Activated CD8-positive, alpha-beta T cell treated with anti-CD3 and anti-CD28 coated beads, Interleukin-2, amount 10 ng/mL, durations not matched to agents 7 days and 5 days (primary cell): ENCODE measurements at regions of chr5 and their contacts with region 1.

Region 1: GRCh38 chr5:14364576-14365472 is 216.8 kb upstream of the OTULINL start:
- DNase-seq: no peak
- ATAC-seq: peak; percentile 25
- H3K4me3 Mint-ChIP-seq: peak overlapping the region; percentile 56
- H3K27ac Mint-ChIP-seq: peak overlapping the region; percentile 36
- H3K4me1 Mint-ChIP-seq: peaks cover 61% of the 10 kb centered on the region
- H3K27me3 Mint-ChIP-seq: peaks cover 1% of the 10 kb centered on the region

Region 2: DNA sequence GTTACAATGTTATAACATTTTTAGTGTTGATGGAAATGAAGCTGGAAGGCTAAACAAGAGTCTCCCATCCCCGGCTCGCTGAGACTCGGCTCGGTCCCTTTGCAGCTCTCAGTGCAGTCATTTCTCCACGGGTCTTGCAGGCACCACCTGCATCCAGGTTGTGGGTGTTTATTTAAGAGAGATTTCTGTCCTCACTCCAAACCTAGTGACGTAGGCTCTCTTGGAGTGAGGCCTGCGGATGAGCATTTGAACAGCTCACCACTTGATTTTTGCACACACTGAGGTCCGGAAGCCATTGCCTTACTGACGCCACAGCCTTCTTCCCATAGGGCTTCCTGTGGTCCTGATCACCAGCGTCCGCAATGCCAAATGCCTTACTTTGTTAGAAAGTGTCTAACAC is 19.1 kb after region 1 on chr5:
- CTCF ChIA-PET with region 1: interaction called, 29 read pairs
- POLR2A ChIA-PET with region 1: interaction called, 3 read pairs
- DNase-seq: no peak
- ATAC-seq: no peak
- H3K4me3 Mint-ChIP-seq: no peak overlapping the region
- H3K27ac Mint-ChIP-seq: no peak overlapping the region
- H3K4me1 Mint-ChIP-seq: peaks cover 14% of the 10 kb centered on the region
- H3K27me3 Mint-ChIP-seq: peaks cover 5% of the 10 kb centered on the region

Region 3: GRCh38 chr5:14415024-14415697 is 50.3 kb after region 1 on chr5:
- CTCF ChIA-PET with region 1: interaction called, 39 read pairs
- POLR2A ChIA-PET with region 1: interaction called, 15 read pairs
- DNase-seq: peak; percentile 60
- ATAC-seq: peak; percentile 59
- H3K4me3 Mint-ChIP-seq: peak overlapping the region; percentile 71
- H3K27ac Mint-ChIP-seq: peak overlapping the region; percentile 94
- H3K4me1 Mint-ChIP-seq: peaks cover 63% of the 10 kb centered on the region
- H3K27me3 Mint-ChIP-seq: no peaks in the 10 kb centered on the region

Region 4: DNA sequence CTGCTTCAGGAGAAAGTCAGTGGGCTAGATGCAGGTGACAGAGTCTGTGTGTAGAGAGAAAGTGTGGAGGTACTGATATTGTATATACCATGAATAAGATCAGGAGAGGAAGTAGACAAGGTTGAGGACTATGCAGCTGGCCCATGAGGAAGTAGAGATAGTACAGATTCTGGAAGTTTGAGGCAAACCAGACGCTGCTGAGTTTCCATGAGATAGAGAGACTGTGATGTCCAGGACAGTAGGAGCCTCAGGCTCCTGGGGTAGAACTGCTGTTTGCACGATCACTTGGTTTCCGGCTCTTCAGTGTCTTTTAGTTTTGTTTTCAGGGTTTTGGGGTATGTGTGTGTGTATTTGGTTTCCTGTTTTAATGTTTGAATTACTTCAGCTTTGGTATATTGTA is 230.4 kb after region 1 on chr5:
- CTCF ChIA-PET with region 1: interaction called, 27 read pairs
- POLR2A ChIA-PET with region 1: interaction called, 7 read pairs
- DNase-seq: peak; percentile 75
- ATAC-seq: peak; percentile 79
- H3K4me3 Mint-ChIP-seq: peak overlapping the region; percentile 66
- H3K27ac Mint-ChIP-seq: peak overlapping the region; percentile 97
- H3K4me1 Mint-ChIP-seq: peaks cover 91% of the 10 kb centered on the region
- H3K27me3 Mint-ChIP-seq: no peaks in the 10 kb centered on the region

Region 5: DNA sequence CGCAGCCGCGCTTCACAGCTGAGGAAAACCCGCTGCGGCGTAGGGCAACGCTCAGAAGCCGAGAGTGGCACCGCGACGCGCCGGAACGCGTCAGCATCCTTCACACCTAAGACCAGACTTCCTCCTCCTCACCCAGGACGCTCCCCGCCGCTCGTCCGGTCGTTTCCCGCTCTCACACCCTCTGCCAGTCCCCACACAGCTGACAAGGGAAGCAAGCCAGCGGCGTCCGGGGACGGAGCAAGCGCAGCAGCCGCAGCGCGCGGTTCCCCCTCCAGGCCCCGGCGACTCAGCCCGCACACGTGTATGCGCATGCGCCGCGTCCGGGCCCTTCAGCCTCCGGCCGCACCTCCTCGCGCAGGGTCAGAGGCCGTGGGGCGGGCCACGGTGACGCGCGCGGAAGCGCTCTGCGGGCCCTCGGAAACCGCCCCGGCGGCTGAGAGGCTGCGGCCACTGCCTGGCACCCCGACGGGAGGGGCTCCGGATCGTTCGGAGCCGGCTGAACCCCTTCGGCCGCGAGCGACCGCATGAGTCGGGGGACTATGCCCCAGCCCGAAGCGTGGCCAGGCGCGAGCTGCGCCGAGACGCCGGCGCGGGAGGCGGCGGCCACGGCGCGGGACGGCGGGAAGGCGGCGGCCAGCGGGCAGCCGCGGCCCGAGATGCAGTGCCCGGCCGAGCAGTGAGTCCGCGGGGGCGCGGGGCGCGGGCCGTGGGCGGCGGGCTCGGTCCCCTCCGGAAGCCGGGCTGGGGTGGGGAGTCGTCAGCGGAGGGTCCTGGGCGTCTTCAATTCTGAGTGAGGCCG is 299.7 kb after region 1 on chr5 and contains the start of gene OTULIN:
- CTCF ChIA-PET with region 1: interaction called, 13 read pairs
- POLR2A ChIA-PET with region 1: no interaction called
- DNase-seq: peak; percentile 91
- ATAC-seq: peak; percentile 73
- H3K4me3 Mint-ChIP-seq: peak within 1 kb of the TSS; percentile 94
- H3K27ac Mint-ChIP-seq: peak within 1 kb of the TSS; percentile 98
- H3K4me1 Mint-ChIP-seq: peaks cover 73% of the 10 kb centered on the region
- H3K27me3 Mint-ChIP-seq: no peaks in the 10 kb centered on the region
- total RNA-seq, gene OTULIN: 71.2 to 80.7 TPM